ENCODE measurements at regions of chr1 and their contacts with region 1.

Region 1: GRCh38 chr1:174953285-174954072 is 46.3 kb upstream of the CACYBP start:
- DNase-seq: no peak
- ATAC-seq: peak; percentile 21; the same call in 2 of the 3 replicates
- H3K4me3 ChIP-seq: no peak overlapping the region
- H3K27ac ChIP-seq: no peak overlapping the region
- H3K4me1 ChIP-seq: peaks cover 0 to 23% of the 10 kb centered on the region in 2 experiments; a peak in 3 of 5 replicates
- H3K27me3 ChIP-seq: no peaks in the 10 kb centered on the region
- CTCF ChIP-seq: no peak
- EP300 ChIP-seq: no peak
- POLR2A ChIP-seq: no peak
- RAD21 ChIP-seq: no peak

Region 2: GRCh38 chr1:174815036-174815435 is 138.4 kb before region 1 on chr1:
- CTCF ChIA-PET with region 1: no interaction called
- POLR2A ChIA-PET with region 1: no interaction called
- in situ Hi-C with region 1: no loop called
- intact Hi-C with region 1: no loop called
- DNase-seq: peak in 1 of 4 experiments; percentile 18
- ATAC-seq: peak; percentile 47; the same call in 1 of the 3 replicates
- H3K4me3 ChIP-seq: no peak overlapping the region
- H3K27ac ChIP-seq: no peak overlapping the region
- H3K4me1 ChIP-seq: no peaks in the 10 kb centered on the region
- H3K27me3 ChIP-seq: no peaks in the 10 kb centered on the region
- CTCF ChIP-seq: no peak
- EP300 ChIP-seq: no peak
- POLR2A ChIP-seq: no peak
- RAD21 ChIP-seq: no peak

Region 3: GRCh38 chr1:174942547-174943255 is 10.8 kb before region 1 on chr1:
- CTCF ChIA-PET with region 1: no interaction called
- POLR2A ChIA-PET with region 1: interaction called, 12 read pairs
- in situ Hi-C with region 1: no loop called
- intact Hi-C with region 1: no loop called
- DNase-seq: no peak
- ATAC-seq: no peak
- H3K4me3 ChIP-seq: no peak overlapping the region
- H3K27ac ChIP-seq: no peak overlapping the region
- H3K4me1 ChIP-seq: peaks cover 0 to 12% of the 10 kb centered on the region in 2 experiments; a peak in 2 of 5 replicates
- H3K27me3 ChIP-seq: no peaks in the 10 kb centered on the region
- CTCF ChIP-seq: no peak
- EP300 ChIP-seq: no peak
- POLR2A ChIP-seq: no peak
- RAD21 ChIP-seq: no peak